Lower lobe of right lung (tissue), 2 donors: ENCODE measurements at regions of chr1 and their contacts with region 1.

Region 1: GRCh38 chr1:30719406-30720270 is 3.7 kb downstream of the MATN1 start:
- DNase-seq: no peak
- ATAC-seq: no peak
- H3K4me3 ChIP-seq: peak overlapping the region; percentile 63
- H3K27ac ChIP-seq: peak overlapping the region; percentile 98
- H3K4me1 ChIP-seq: peaks cover 11% of the 10 kb centered on the region
- H3K27me3 ChIP-seq: no peaks in the 10 kb centered on the region
- CTCF ChIP-seq: no peak

Region 2: DNA sequence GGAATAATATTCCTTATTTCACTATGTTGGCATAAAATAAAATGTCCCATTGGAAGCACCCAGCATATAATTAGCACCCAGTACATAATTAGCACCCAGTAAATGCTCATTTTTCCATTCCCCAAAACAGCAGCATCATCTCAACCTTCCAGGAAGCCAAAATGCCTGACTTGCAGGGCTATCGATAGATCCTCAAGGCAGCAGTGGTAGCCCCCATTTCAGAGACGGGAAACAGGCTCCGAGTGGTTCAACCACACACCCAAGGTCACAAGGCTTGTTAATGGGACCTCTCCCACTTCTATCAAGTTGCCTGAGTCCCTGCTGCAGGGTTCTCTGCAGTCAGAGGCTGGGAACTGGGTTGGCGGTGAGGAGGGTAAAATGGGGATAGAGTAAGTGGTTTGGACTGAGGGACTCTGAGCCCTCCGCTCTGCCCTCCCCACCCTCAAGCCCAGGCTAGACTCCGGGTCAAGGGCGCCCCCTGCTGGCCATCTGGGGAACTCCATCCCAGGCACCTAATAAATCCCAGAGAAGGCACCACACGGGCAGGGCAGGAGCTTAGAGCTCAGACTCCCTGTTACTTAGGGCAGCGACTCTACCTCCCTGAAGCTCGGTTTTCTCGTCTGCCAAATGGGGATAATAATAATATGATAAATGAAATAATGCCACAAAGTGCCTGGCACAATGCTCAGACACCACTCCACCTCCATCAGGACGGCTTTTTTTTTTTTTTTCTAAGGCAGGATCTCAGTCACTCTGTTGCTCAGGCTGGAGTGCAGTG is 59.8 kb after region 1 on chr1:
- intact Hi-C with region 1: loop called (anchors 10 kb)
- DNase-seq: peak; percentile 89
- ATAC-seq: peak; percentile 82 to 83
- H3K4me3 ChIP-seq: no peak overlapping the region
- H3K27ac ChIP-seq: no peak overlapping the region
- H3K4me1 ChIP-seq: peaks cover 21% of the 10 kb centered on the region
- H3K27me3 ChIP-seq: no peaks in the 10 kb centered on the region
- CTCF ChIP-seq: peak; percentile 97